ENCODE measurements at regions of chr1 and their contacts with region 1.

Region 1: DNA sequence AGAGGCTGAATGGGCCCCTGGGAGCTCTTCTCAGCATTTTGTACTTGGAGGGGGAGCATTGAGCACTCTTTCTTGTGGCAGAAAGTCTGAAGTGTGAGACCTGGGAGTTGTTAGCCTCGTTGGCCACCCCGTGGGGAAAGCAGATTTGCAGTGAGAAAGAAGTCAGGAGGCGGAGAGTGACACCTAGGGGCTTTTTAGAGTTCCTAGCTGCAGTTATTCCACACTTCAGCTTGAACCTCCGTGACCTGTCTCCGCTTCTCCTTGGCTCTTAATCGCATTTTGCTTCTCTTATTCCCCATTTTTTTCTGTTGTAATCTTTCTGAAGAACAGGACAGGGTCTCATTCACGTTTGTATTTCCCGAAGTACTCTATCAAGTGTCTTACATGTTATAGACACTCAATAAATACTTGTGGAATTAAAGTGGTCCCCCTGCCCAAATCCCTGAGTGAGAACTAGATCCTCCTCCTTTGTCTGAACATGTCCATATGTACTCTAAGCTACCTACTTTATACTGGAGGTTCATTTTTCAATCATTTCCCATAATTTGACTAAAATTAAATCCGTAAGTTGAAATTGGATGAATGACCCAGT is 14.5 kb upstream of the C1orf141 start:
- DNase-seq: peak; percentile 67
- ATAC-seq: peak; percentile 96
- H3K4me3 Mint-ChIP-seq: no peak overlapping the region
- H3K27ac Mint-ChIP-seq: no peak overlapping the region
- H3K4me1 Mint-ChIP-seq: peaks cover 8% of the 10 kb centered on the region
- H3K27me3 Mint-ChIP-seq: peaks cover 7% of the 10 kb centered on the region; the same call in 1 of the 2 replicates
- CTCF ChIP-seq: peak; percentile 41; the same call in 1 of the 2 replicates

Region 2: GRCh38 chr1:67019600-67020136 is 129.6 kb before region 1 on chr1:
- CTCF ChIA-PET with region 1: interaction called, 12 read pairs
- POLR2A ChIA-PET with region 1: interaction called, 3 read pairs
- DNase-seq: no peak
- ATAC-seq: peak; percentile 85
- H3K4me3 Mint-ChIP-seq: no peak overlapping the region
- H3K27ac Mint-ChIP-seq: peak overlapping the region; percentile 30; the same call in 1 of the 2 replicates
- H3K4me1 Mint-ChIP-seq: peaks cover 29% of the 10 kb centered on the region
- H3K27me3 Mint-ChIP-seq: peaks cover 25% of the 10 kb centered on the region
- CTCF ChIP-seq: no peak

Region 3: GRCh38 chr1:67134695-67135094 is 14.6 kb before region 1 on chr1 and contains the start of gene C1orf141:
- CTCF ChIA-PET with region 1: interaction called, 13 read pairs
- POLR2A ChIA-PET with region 1: no interaction called
- DNase-seq: peak; percentile 62
- ATAC-seq: peak; percentile 86
- H3K4me3 Mint-ChIP-seq: peak within 1 kb of the TSS; percentile 77
- H3K27ac Mint-ChIP-seq: no peak within 1 kb of the TSS
- H3K4me1 Mint-ChIP-seq: peaks cover 16% of the 10 kb centered on the region
- H3K27me3 Mint-ChIP-seq: peaks cover 8% of the 10 kb centered on the region; the same call in 1 of the 2 replicates
- CTCF ChIP-seq: no peak
- total RNA-seq, gene C1orf141: not detected in 3 replicates

Region 4: GRCh38 chr1:67250051-67250653 is 100.9 kb after region 1 on chr1:
- CTCF ChIA-PET with region 1: no interaction called
- POLR2A ChIA-PET with region 1: no interaction called
- DNase-seq: no peak
- ATAC-seq: no peak
- H3K4me3 Mint-ChIP-seq: no peak overlapping the region
- H3K27ac Mint-ChIP-seq: no peak overlapping the region
- H3K4me1 Mint-ChIP-seq: no peaks in the 10 kb centered on the region
- H3K27me3 Mint-ChIP-seq: peaks cover 21% of the 10 kb centered on the region
- CTCF ChIP-seq: no peak